GM23248 (cell line): ENCODE measurements at regions of chr5 and their contacts with region 1.

Region 1: GRCh38 chr5:112551419-112552032 is 132.4 kb upstream of the EPB41L4A start:
- DNase-seq: peak; percentile 83
- H3K4me3 ChIP-seq: no peak overlapping the region
- H3K27ac ChIP-seq: no peak overlapping the region
- H3K4me1 ChIP-seq: peaks cover 22% of the 10 kb centered on the region
- H3K27me3 ChIP-seq: peaks cover 9% of the 10 kb centered on the region

Region 2: DNA sequence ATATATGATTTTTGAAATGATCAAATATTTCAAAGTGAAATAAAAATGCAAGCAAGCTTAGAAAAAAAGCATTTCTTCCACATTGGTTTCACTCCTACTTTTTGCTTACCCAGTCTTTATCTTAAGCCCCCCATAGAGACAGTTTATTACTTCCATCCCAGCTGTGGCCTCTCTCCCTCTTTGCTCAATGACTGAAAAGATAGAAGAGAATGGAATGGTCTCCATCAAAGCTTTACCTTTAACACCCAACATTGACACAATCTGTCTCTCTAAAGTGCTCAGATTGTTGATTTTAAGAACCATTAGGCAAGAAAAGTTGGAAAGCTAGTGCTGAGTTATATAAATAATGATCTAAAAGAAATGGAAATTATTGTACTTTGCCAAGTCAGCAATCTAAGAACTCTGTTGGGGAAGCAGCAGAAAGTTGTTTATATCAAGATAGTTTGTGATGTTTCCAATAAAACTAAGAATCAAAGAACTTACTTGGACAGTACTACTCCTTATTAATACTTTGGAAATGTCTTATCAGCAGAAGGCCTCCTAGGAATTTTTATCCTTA is 517.0 kb before region 1 on chr5:
- in situ Hi-C with region 1: no loop called
- DNase-seq: no peak
- H3K4me3 ChIP-seq: no peak overlapping the region
- H3K27ac ChIP-seq: no peak overlapping the region
- H3K4me1 ChIP-seq: no peaks in the 10 kb centered on the region
- H3K27me3 ChIP-seq: no peaks in the 10 kb centered on the region

Region 3: GRCh38 chr5:112445626-112446350 is 105.7 kb before region 1 on chr5:
- in situ Hi-C with region 1: no loop called
- DNase-seq: no peak
- H3K4me3 ChIP-seq: no peak overlapping the region
- H3K27ac ChIP-seq: no peak overlapping the region
- H3K4me1 ChIP-seq: no peaks in the 10 kb centered on the region
- H3K27me3 ChIP-seq: no peaks in the 10 kb centered on the region

Region 4: DNA sequence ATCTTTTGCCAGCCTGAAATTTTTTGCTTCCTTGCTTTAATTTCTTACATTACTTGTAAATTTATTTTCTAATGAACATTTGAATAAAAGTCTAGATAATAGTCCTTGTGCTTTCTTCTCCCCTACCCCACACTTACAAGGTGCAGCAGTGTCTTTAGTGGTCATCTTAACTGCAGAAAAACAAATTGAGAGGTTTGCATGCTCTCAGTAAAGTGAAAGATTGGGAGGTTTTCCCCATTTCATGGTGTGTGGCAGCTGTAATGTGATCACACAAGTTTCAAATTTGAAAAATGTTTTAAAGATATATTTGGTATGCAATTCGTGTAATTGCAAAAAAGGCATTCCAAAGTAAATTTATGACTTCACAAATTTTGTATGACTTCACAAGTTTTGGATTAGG is 200.8 kb after region 1 on chr5:
- in situ Hi-C with region 1: loop called (anchors 5 kb)
- DNase-seq: no peak
- H3K4me3 ChIP-seq: no peak overlapping the region
- H3K27ac ChIP-seq: no peak overlapping the region
- H3K4me1 ChIP-seq: peaks cover 5% of the 10 kb centered on the region; the same call in 1 of the 2 replicates
- H3K27me3 ChIP-seq: no peaks in the 10 kb centered on the region

Region 5: GRCh38 chr5:112958093-112959088 is 406.9 kb after region 1 on chr5:
- in situ Hi-C with region 1: loop called (anchors 25 kb)
- DNase-seq: peak; percentile 98
- H3K4me3 ChIP-seq: no peak overlapping the region; the same call in 1 of the 2 replicates
- H3K27ac ChIP-seq: no peak overlapping the region
- H3K4me1 ChIP-seq: peaks cover 30% of the 10 kb centered on the region
- H3K27me3 ChIP-seq: peaks cover 4% of the 10 kb centered on the region